ENCODE measurements at regions of chr6 and their contacts with region 1.

Region 1: DNA sequence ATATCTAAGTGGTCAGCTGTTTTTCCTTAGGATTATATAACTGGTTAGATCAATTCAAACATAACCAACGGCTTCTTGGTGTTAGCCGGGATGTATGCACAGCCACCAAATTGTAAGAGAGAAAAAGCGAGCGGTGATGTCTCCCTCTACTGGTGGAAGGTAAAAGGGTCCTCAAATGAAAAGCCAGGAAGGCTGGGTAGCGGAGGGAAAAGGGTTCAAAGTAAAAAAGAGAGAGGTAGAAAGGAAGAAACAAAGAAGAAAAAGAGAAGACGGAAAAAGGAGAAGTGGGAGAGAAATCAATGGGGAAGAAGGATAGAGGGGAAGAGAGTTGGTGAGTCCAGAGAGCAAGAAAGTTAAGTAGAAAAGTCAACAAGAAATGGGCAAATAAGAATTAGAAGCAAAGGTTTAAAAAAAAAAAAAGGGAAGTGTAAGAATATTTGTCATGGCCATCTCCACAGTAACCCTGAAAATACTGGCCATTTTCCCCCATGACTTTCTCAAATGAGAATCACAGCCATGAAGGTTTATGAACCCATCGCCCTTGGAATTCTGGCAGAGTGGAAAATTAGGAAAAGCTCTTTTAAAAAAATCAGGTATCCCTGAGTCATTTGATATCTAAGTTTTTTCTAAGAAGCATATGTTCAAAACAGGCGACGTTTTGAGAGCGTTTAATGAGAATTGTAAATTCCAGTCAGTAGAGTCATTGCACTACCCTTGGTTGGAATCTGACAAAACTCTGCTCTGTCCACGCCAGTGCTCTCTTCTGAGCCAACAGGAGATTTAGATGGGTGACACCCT is 155.6 kb upstream of the SNX9 start:
- DNase-seq: peak; percentile 82 to 83 (median 82)
- ATAC-seq: peak; percentile 95
- H3K4me3 ChIP-seq: no peak overlapping the region
- H3K27ac ChIP-seq: no peak overlapping the region
- H3K4me1 ChIP-seq: peaks cover 2 to 4% of the 10 kb centered on the region in 2 experiments; a peak in 1 of 5 replicates
- H3K27me3 ChIP-seq: no peaks in the 10 kb centered on the region
- CTCF ChIP-seq: peak; percentile 89 to 93 (median 91)
- EP300 ChIP-seq: no peak
- POLR2A ChIP-seq: no peak
- RAD21 ChIP-seq: peak; percentile 91 to 93

Region 2: GRCh38 chr6:157461000-157461915 is 206.2 kb before region 1 on chr6:
- CTCF ChIA-PET with region 1: no interaction called
- POLR2A ChIA-PET with region 1: no interaction called
- in situ Hi-C with region 1: no loop called
- intact Hi-C with region 1: loop called (anchors 5 kb)
- DNase-seq: peak; percentile 76 to 90 (median 82)
- ATAC-seq: peak; percentile 85
- H3K4me3 ChIP-seq: no peak overlapping the region
- H3K27ac ChIP-seq: peak overlapping the region; percentile 54; the same call in 2 of the 3 replicates
- H3K4me1 ChIP-seq: peaks cover 51 to 66% of the 10 kb centered on the region in 2 experiments
- H3K27me3 ChIP-seq: no peaks in the 10 kb centered on the region
- CTCF ChIP-seq: peak; percentile 84 to 98 (median 91)
- EP300 ChIP-seq: peak; percentile 52; the same call in 1 of the 2 replicates
- POLR2A ChIP-seq: no peak
- RAD21 ChIP-seq: peak; percentile 67 to 79

Region 3: DNA sequence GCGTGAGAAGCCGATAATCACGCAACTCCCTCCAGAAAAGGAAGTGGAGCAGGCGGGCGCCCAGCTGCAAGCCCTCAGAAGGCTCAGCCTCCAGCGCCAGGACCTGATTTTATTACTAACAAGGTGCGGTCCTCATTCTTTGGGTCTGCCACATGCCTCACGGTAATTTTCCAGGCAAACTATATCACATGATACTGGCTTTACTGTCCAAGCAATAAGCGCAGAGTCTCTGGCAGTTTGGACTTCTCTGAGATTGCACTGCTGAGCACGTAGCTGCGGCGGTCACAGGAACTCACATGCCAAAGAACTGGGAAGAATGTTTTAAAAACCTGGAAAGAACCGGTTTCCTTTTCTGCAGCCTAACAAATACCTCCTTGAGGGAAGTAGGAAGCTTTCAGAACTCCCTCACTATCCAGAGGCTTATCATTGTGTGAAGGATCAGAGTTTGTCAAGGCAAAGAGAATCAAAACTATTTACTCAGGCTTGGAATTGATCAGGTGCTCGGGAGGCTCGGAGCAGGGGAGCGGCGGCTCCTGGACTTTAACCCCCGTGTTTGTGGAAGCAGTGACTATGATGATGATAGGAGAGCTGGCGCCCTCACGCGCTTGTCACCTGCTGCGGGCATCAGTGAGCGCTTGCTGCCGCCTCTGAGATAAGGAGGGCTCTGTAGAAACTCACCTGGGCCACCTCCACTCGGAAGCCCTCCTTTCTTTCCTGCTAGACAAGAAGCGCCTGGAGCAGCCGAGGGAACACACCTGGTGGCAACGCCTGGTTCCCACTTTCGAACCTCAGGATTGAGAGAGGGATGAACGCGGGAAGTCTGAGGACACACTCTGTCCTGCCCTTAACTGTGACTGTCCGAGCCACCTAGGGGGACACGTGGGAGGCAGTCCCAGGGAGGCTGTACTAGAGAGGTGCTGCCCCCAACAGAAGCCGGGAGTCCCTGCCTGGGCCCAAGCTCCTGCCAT is 287.0 kb after region 1 on chr6:
- CTCF ChIA-PET with region 1: no interaction called
- POLR2A ChIA-PET with region 1: no interaction called
- in situ Hi-C with region 1: no loop called
- intact Hi-C with region 1: loop called (anchors 5 kb)
- DNase-seq: no peak
- ATAC-seq: peak; percentile 74
- H3K4me3 ChIP-seq: no peak overlapping the region
- H3K27ac ChIP-seq: no peak overlapping the region
- H3K4me1 ChIP-seq: peaks cover 6 to 13% of the 10 kb centered on the region in 2 experiments; a peak in 4 of 5 replicates
- H3K27me3 ChIP-seq: peaks cover 9 to 24% of the 10 kb centered on the region in 2 experiments; a peak in 3 of 5 replicates
- CTCF ChIP-seq: peak in 2 of 3 experiments; percentile 6 to 18; a peak in 2 of 6 replicates
- EP300 ChIP-seq: no peak
- POLR2A ChIP-seq: no peak
- RAD21 ChIP-seq: peak in 1 of 2 experiments; percentile 36; a peak in 1 of 4 replicates

Measured in K562 (cell line).